Activated T-helper 2 cell treated with anti-CD3 and anti-CD28 coated beads, Interferon-gamma antibody, Interleukin-2, Interleukin-4, amounts not matched to agents 10 μg/mL and 5 μg/mL and 100 μg/mL, durations not matched to agents 14 hours and 24 hours and 36 hours (primary cell): ENCODE measurements at regions of chr17 and their contacts with region 1.

Region 1: GRCh38 chr17:61221597-61222460 is 177.8 kb upstream of the TBX2 start:
- DNase-seq: peak; percentile 16
- H3K4me3 Mint-ChIP-seq: peak overlapping the region; percentile 63
- H3K27ac Mint-ChIP-seq: peak overlapping the region; percentile 81
- H3K4me1 Mint-ChIP-seq: peaks cover 56% of the 10 kb centered on the region
- H3K27me3 Mint-ChIP-seq: no peaks in the 10 kb centered on the region

Region 2: DNA sequence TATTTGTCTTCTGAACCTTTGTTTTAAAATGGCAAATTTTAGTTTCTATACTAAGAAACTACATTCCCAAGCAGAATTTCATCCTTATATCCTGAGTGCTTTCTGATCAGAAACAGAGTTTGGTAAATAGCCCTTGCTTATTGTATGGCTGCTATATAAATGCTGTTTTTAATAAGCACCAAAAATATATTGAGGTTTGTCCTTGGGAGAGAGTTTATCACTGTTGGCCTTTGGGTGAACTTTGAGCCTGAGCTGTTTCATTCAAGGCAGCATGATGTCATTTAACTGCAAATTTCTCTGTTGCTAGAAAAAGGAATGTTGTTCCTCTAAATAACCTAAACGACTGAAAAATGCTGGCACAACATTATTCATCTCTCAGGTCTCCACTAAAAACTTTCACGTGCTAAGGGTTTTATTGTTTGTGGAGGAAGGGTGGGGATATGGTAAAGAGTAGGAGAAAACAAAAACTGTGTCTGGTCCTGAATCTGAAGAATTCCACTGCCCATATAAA is 156.5 kb before region 1 on chr17:
- intact Hi-C with region 1: loop called (anchors 2 kb)
- DNase-seq: no peak
- H3K4me3 Mint-ChIP-seq: peak overlapping the region; percentile 38
- H3K27ac Mint-ChIP-seq: peak overlapping the region; percentile 55
- H3K4me1 Mint-ChIP-seq: peaks cover 15% of the 10 kb centered on the region
- H3K27me3 Mint-ChIP-seq: no peaks in the 10 kb centered on the region

Region 3: GRCh38 chr17:61139219-61139618 is 82.6 kb before region 1 on chr17:
- intact Hi-C with region 1: loop called (anchors 1 kb)
- DNase-seq: peak; percentile 52
- H3K4me3 Mint-ChIP-seq: peak overlapping the region; percentile 52
- H3K27ac Mint-ChIP-seq: peak overlapping the region; percentile 53
- H3K4me1 Mint-ChIP-seq: peaks cover 24% of the 10 kb centered on the region
- H3K27me3 Mint-ChIP-seq: no peaks in the 10 kb centered on the region

Region 4: GRCh38 chr17:61239261-61239660 is 17.4 kb after region 1 on chr17:
- intact Hi-C with region 1: loop called (anchors 1 kb)
- DNase-seq: no peak
- H3K4me3 Mint-ChIP-seq: peak overlapping the region; percentile 45
- H3K27ac Mint-ChIP-seq: peak overlapping the region; percentile 43
- H3K4me1 Mint-ChIP-seq: peaks cover 20% of the 10 kb centered on the region
- H3K27me3 Mint-ChIP-seq: no peaks in the 10 kb centered on the region

Region 5: GRCh38 chr17:61279476-61280143 is 57.8 kb after region 1 on chr17:
- intact Hi-C with region 1: loop called (anchors 2 kb)
- DNase-seq: no peak
- H3K4me3 Mint-ChIP-seq: no peak overlapping the region
- H3K27ac Mint-ChIP-seq: no peak overlapping the region
- H3K4me1 Mint-ChIP-seq: peaks cover 23% of the 10 kb centered on the region
- H3K27me3 Mint-ChIP-seq: no peaks in the 10 kb centered on the region

Region 6: DNA sequence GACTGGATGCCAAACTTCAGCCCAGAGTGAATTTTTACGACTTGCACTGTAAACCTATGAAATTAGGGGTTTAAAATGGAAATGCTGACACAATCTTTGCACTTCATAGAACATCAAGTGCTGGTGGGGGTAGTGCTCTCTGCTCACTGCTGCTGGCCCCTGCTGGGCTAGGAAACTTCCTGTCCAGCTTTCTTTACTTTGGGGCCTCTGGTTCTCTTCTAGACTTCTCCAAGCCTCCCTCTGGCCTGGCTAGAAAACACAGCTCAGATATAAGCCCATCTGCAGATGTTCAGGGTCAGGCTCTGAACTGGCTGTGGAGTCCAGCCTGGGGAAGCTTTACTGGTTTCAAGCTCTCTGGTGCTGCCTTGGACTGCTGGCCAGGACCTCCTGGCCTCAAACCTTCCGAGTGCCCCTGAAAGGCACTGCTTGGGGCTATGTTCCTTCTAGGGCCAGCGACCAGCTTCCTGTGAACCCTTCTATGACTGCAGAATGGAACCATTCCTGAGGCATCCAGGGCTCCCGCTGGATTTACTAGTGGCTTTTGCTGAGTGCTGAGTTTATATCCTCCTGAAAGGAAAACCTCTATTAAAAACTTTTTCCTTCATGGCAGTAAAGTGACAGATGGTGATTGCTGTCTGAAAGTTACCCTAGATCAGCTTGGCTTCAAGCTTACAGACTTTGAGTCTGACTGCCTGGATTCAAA is 289.8 kb after region 1 on chr17:
- intact Hi-C with region 1: no loop called
- DNase-seq: no peak
- H3K4me3 Mint-ChIP-seq: no peak overlapping the region
- H3K27ac Mint-ChIP-seq: no peak overlapping the region
- H3K4me1 Mint-ChIP-seq: no peaks in the 10 kb centered on the region
- H3K27me3 Mint-ChIP-seq: peaks cover 24% of the 10 kb centered on the region